Activated CD8-positive, alpha-beta T cell treated with anti-CD3 and anti-CD28 coated beads for 36 hours (primary cell): ENCODE measurements at regions of chr6 and their contacts with region 1.

Region 1: DNA sequence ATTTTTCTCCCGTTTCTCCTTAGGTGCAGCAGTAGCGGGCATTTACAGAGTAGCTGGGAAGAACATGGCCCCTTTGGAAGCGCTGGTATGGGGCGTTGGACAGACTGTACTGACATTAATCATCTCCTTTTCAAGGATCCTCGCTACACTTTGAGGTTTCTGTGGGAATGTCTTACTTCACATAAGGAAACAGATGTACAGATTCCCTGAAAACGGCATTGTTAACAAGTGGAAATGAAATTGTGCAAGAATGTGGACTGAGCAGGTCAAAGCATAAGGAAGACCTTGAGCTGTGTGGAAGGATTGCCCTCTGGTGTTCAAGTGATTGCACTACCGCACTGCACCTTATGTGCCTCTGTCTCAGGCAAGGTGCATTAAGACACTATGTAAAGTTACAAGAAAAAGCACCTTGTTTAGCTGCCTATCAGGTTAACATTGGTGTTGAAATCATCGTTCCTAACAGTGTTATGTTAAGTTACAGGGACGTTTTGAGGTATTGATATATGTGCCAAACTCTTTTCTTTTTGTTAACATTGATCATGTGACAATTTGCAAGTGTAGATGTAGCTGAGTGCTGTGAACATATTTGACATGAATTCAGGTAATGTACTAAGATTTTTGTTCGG is 38.0 kb downstream of the TMEM170B start:
- DNase-seq: peak; percentile 69
- ATAC-seq: peak; percentile 99
- H3K4me3 Mint-ChIP-seq: no peak overlapping the region
- H3K27ac Mint-ChIP-seq: no peak overlapping the region
- H3K4me1 Mint-ChIP-seq: no peaks in the 10 kb centered on the region
- H3K27me3 Mint-ChIP-seq: no peaks in the 10 kb centered on the region
- CTCF ChIP-seq: peak; percentile 88

Region 2: DNA sequence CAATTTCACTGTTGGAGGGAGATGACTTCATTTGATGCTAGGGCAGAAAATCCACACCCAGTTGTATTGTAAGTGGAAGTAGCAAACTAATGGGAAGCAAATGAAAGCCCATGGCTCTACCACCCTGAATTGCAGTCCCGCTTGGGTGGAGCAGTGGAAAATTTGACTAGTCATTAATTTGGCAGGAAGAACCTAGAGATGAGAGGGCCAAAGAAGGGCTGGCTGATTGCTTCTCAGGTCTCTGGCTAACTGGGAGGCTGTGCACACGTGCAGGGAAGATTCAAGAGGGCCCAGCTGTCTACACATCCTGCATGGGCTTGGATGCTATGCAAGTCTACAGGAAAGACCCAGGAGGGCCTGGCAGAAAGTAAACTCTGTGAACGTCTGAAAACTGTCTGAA is 1626.8 kb before region 1 on chr6:
- CTCF ChIA-PET with region 1: no interaction called
- POLR2A ChIA-PET with region 1: no interaction called
- intact Hi-C with region 1: no loop called
- DNase-seq: no peak
- ATAC-seq: no peak
- H3K4me3 Mint-ChIP-seq: no peak overlapping the region
- H3K27ac Mint-ChIP-seq: no peak overlapping the region
- H3K4me1 Mint-ChIP-seq: no peaks in the 10 kb centered on the region
- H3K27me3 Mint-ChIP-seq: no peaks in the 10 kb centered on the region
- CTCF ChIP-seq: no peak

Region 3: DNA sequence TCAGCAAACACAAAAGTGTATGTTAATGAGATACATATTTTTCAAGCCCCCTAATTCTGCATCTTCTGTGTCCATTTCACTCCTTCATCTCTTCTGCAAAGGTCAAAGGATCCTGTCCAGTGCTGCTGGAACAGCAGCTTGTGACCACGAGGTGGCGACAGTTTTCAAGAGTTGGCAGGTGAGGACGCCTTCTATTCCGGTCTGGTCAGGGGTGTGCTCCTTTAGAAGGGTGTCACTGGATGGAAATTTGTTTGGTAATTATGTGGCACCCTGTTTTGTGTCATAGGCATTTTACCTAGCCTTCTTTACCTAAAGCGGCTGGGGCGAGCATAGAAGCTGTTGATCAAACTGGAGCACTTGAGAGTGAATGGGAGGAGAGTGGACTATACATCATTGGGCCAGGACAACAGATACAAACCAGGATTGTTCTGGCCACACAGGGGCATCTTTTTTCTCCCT is 431.1 kb before region 1 on chr6:
- CTCF ChIA-PET with region 1: interaction called, 9 read pairs
- POLR2A ChIA-PET with region 1: no interaction called
- intact Hi-C with region 1: loop called (anchors 5 kb)
- DNase-seq: peak; percentile 87
- ATAC-seq: peak; percentile 96
- H3K4me3 Mint-ChIP-seq: no peak overlapping the region
- H3K27ac Mint-ChIP-seq: no peak overlapping the region
- H3K4me1 Mint-ChIP-seq: peaks cover 11% of the 10 kb centered on the region
- H3K27me3 Mint-ChIP-seq: no peaks in the 10 kb centered on the region
- CTCF ChIP-seq: peak; percentile 85

Region 4: DNA sequence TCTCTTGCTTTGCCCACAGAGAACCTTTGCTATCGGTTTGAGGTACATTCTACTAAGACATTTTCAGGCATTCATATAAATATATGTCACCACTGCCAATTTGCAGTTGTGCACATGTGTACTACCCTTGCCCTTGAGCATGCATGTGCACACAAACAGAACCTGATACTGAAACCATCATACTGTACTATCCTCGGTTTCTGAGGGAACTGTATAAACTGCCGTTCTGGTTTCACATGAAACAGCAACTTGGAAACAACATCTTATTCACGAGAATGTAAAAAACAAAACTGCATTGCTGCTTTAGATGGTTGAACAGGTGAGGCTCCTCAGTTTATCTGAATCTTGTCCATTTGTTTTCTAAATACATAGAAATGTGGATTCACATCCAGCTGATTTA is 189.2 kb before region 1 on chr6:
- CTCF ChIA-PET with region 1: no interaction called
- POLR2A ChIA-PET with region 1: no interaction called
- intact Hi-C with region 1: no loop called
- DNase-seq: no peak
- ATAC-seq: peak; percentile 10
- H3K4me3 Mint-ChIP-seq: no peak overlapping the region
- H3K27ac Mint-ChIP-seq: peak overlapping the region; percentile 1
- H3K4me1 Mint-ChIP-seq: peaks cover 34% of the 10 kb centered on the region
- H3K27me3 Mint-ChIP-seq: peaks cover 2% of the 10 kb centered on the region
- CTCF ChIP-seq: no peak

Region 5: DNA sequence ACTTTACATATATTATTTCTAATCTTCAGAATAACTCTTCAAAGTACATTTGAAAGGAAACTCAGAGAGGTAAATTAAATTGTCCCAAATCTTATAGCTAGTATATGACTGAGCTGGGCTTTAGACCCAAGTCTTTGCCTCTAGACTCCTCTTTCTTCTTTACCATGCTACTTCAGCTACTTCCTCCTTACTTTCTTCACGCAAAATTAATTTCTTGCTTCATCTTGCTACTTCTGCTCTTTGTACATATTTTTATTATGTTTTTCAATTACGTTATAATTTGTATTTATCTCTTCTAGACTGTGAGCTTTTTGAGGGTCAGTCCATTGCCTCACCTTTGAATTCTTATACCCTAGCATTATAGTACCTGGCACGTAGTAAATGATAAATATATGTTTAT is 32.7 kb before region 1 on chr6:
- CTCF ChIA-PET with region 1: interaction called, 10 read pairs
- POLR2A ChIA-PET with region 1: interaction called, 3 read pairs
- intact Hi-C with region 1: no loop called
- DNase-seq: no peak
- ATAC-seq: no peak
- H3K4me3 Mint-ChIP-seq: no peak overlapping the region
- H3K27ac Mint-ChIP-seq: no peak overlapping the region
- H3K4me1 Mint-ChIP-seq: peaks cover 7% of the 10 kb centered on the region
- H3K27me3 Mint-ChIP-seq: no peaks in the 10 kb centered on the region
- CTCF ChIP-seq: no peak

Region 6: DNA sequence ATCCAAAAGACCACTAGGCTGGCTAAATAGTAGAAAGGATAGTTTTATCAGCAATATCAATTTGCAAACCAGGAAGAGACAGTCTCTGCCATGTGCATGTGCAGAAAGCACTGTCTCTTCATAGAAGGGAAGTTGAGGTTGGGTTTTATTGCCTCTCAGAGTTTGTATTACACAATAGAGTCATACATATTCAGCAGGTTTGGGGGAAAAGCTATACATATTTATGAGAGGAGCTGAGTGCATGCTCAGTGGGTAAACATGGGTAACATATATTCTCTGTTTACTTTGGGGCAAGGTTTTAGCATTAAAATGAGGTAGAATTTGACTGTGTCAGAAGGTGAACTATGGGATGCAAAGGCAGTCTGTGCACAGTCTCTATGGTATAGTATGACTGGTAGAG is 23.1 kb before region 1 on chr6:
- CTCF ChIA-PET with region 1: interaction called, 14 read pairs
- POLR2A ChIA-PET with region 1: no interaction called
- intact Hi-C with region 1: no loop called
- DNase-seq: no peak
- ATAC-seq: no peak
- H3K4me3 Mint-ChIP-seq: no peak overlapping the region
- H3K27ac Mint-ChIP-seq: no peak overlapping the region
- H3K4me1 Mint-ChIP-seq: peaks cover 7% of the 10 kb centered on the region
- H3K27me3 Mint-ChIP-seq: no peaks in the 10 kb centered on the region
- CTCF ChIP-seq: no peak